GM18951 (cell line): ENCODE measurements at regions of chr1 and their contacts with region 1.

Region 1: GRCh38 chr1:43934101-43934985 is 742 bp downstream of the ARTN start:
- POLR2A ChIP-seq: no peak

Region 2: GRCh38 chr1:43529206-43529731 is 405.1 kb before region 1 on chr1:
- in situ Hi-C with region 1: loop called (anchors 10 kb)
- POLR2A ChIP-seq: no peak

Region 3: GRCh38 chr1:43757343-43758053 is 176.8 kb before region 1 on chr1:
- in situ Hi-C with region 1: loop called (anchors 10 kb)
- POLR2A ChIP-seq: no peak